Right ventricle myocardium superior (tissue), 1 donor: ENCODE measurements at regions of chr12 and their contacts with region 1.

Region 1: GRCh38 chr12:6533923-6534694 is at the start of gene GAPDH:
- DNase-seq: peak; percentile 96
- ATAC-seq: peak; percentile 82
- total RNA-seq, gene GAPDH: 4,109 TPM

Region 2: GRCh38 chr12:6323340-6323994 is 210.6 kb before region 1 on chr12:
- intact Hi-C with region 1: loop called (anchors 10 kb)
- DNase-seq: peak; percentile 71
- ATAC-seq: peak; percentile 51